ENCODE measurements at regions of chr6 and their contacts with region 1.

Region 1: GRCh38 chr6:36360241-36361054 is 23.8 kb upstream of the BNIP5 start:
- DNase-seq: peak; percentile 83 to 89
- H3K4me3 ChIP-seq: no peak overlapping the region
- H3K27ac ChIP-seq: peak overlapping the region; percentile 22 to 33
- H3K4me1 ChIP-seq: peaks cover 0 to 31% (median 22%) of the 10 kb centered on the region in 4 donors
- H3K27me3 ChIP-seq: peaks cover 0 to 3% of the 10 kb centered on the region in 2 donors
- CTCF ChIP-seq: peak; percentile 80 to 93

Region 2: GRCh38 chr6:35287671-35288396 is 1072.6 kb before region 1 on chr6:
- intact Hi-C with region 1: no loop called
- DNase-seq: no peak
- H3K4me3 ChIP-seq: no peak overlapping the region
- H3K27ac ChIP-seq: no peak overlapping the region
- H3K4me1 ChIP-seq: no peaks in the 10 kb centered on the region
- H3K27me3 ChIP-seq: no peaks in the 10 kb centered on the region
- CTCF ChIP-seq: no peak

Region 3: DNA sequence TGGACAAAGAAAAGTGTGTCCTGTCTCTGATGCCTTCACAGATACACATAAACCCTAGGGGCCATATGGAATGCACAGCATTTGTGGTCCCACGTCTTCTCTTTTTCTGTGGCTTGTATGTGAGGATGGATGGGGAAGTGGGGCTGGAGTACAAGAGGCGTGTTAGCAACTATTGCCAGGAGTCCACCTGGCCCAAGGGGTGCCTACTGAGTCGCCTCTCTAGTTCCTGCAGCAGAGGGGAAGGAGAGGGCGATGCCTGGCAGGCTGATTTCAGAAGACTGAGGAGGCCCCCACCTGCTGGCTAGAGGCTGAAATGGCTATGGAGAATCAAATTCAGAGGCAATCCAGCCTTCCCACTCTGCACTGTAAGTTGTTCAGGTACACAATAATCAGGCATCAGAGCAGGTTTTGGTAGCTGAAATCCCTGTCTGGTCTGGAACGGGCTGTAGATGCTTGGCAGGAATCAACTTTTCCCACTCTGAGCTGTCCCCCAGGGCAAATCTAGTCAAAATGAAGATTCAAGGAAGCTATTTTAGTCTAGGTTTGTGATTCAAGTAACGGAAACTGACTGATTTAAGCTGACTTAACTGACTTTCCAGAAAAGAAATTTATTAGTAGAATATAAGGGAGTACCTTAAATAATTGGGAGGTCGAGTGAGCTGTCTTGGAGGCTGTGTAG is 1033.0 kb before region 1 on chr6:
- intact Hi-C with region 1: no loop called
- DNase-seq: peak in 1 of 2 donors; percentile 48
- H3K4me3 ChIP-seq: no peak overlapping the region
- H3K27ac ChIP-seq: no peak overlapping the region
- H3K4me1 ChIP-seq: no peaks in the 10 kb centered on the region
- H3K27me3 ChIP-seq: peaks cover 0 to 4% of the 10 kb centered on the region in 2 donors
- CTCF ChIP-seq: peak; percentile 45 to 48

Region 4: GRCh38 chr6:36042618-36043260 is 317.7 kb before region 1 on chr6:
- intact Hi-C with region 1: loop called (anchors 5 kb)
- DNase-seq: no peak
- H3K4me3 ChIP-seq: no peak overlapping the region
- H3K27ac ChIP-seq: no peak overlapping the region
- H3K4me1 ChIP-seq: peaks cover 0 to 70% (median 28%) of the 10 kb centered on the region in 4 donors
- H3K27me3 ChIP-seq: no peaks in the 10 kb centered on the region
- CTCF ChIP-seq: no peak

Region 5: GRCh38 chr6:36123257-36124139 is 236.9 kb before region 1 on chr6:
- intact Hi-C with region 1: loop called (anchors 5 kb)
- DNase-seq: peak; percentile 81 to 89
- H3K4me3 ChIP-seq: no peak overlapping the region
- H3K27ac ChIP-seq: no peak overlapping the region
- H3K4me1 ChIP-seq: peaks cover 0 to 19% (median 5%) of the 10 kb centered on the region in 4 donors
- H3K27me3 ChIP-seq: peaks cover 0 to 32% of the 10 kb centered on the region in 2 donors
- CTCF ChIP-seq: peak; percentile 67 to 68

Region 6: DNA sequence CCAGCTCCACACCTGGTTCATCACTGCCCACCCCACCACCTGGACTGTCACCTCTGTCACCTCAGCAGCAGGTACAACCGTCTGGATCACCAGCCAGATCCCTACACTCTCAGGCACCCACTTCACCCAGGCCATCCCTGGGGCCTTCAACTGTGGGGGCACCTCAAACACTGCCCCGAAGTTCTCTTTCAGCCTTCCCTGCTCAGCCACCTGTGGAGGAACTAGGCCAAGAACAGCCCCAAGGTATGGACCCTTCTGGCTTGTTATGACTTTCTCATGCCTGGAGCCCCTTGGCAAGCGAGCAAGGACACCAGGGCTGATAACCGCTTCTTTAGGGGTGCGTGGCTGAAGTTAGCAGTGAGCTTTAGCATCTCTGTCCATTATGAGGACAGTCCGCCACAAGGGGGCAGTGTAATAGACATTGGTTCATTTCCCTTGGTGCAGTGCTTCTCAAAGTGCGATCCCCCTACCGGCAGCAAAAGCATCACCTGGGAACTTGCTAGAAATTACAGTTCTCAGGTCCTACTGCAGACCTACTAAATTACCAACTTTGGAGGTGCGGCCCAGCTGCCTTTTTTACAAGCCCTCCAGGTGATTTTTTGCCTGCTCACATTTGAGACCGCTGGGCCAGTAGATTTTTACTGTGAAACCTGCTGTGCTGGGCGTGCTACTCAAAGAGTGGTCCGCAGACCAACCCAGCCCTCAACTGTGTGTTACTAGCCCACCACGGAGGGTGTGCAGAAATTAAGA is 58.0 kb before region 1 on chr6:
- intact Hi-C with region 1: loop called (anchors 5 kb)
- DNase-seq: peak; percentile 88 to 89
- H3K4me3 ChIP-seq: no peak overlapping the region
- H3K27ac ChIP-seq: no peak overlapping the region
- H3K4me1 ChIP-seq: peaks cover 0 to 13% (median 5%) of the 10 kb centered on the region in 4 donors
- H3K27me3 ChIP-seq: peaks cover 0 to 10% of the 10 kb centered on the region in 2 donors
- CTCF ChIP-seq: peak; percentile 88

Region 7: GRCh38 chr6:36340618-36341454 is 19.6 kb before region 1 on chr6:
- intact Hi-C with region 1: loop called (anchors 2 kb)
- DNase-seq: peak; percentile 74 to 85
- H3K4me3 ChIP-seq: peak overlapping the region; percentile 28 to 32
- H3K27ac ChIP-seq: peak overlapping the region; percentile 34 to 52
- H3K4me1 ChIP-seq: peaks cover 0 to 23% (median 5%) of the 10 kb centered on the region in 4 donors
- H3K27me3 ChIP-seq: peaks cover 0 to under 1% of the 10 kb centered on the region in 2 donors
- CTCF ChIP-seq: peak; percentile 89 to 95

Region 8: DNA sequence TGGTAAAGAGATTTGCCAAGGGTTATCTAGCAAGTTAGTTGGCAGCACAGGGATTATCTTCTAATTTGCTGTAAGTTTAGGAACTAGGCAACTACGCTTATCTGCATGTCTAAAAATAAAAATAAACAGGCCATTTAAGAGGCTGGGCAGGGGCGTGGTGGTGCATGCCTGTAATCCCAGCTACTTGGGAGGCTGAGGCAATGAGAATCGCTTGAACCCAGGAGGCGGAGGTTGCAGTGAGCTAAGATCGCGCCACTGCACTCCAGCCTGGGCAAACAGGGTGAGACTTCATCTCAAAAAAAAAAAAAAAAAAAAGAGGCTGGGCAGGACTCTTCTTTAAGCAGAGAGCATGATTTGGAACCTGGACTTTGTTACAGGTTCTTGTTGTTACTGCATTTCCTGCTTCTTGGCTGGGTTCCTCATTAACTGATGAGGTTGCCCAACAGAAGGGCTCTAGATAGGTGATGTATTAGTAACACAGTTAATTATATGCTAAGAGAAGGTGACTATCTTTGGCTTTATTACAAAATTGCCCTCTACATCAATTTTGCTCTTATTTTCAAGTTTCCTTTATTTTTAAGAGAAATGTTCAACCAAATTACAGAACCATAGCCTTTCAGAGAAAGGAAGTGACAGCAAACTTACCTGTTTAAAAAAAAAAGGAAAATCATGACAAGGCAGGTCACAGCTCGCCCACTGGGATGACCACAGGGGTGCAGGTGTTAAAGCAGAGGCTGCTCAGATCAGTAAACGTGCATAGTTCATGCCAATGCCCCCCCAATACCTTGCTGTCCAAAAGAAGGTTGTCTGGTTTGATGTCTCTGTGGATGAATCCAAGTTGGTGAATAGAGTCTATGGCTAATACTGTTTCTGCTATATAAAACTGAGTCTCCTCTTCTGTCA is 154.4 kb after region 1 on chr6:
- intact Hi-C with region 1: no loop called
- DNase-seq: no peak
- H3K4me3 ChIP-seq: no peak overlapping the region
- H3K27ac ChIP-seq: no peak overlapping the region
- H3K4me1 ChIP-seq: no peaks in the 10 kb centered on the region
- H3K27me3 ChIP-seq: no peaks in the 10 kb centered on the region
- CTCF ChIP-seq: no peak

Region 9: GRCh38 chr6:36526066-36526465 is 165.6 kb after region 1 on chr6:
- intact Hi-C with region 1: no loop called
- DNase-seq: no peak
- H3K4me3 ChIP-seq: no peak overlapping the region
- H3K27ac ChIP-seq: no peak overlapping the region
- H3K4me1 ChIP-seq: no peaks in the 10 kb centered on the region
- H3K27me3 ChIP-seq: no peaks in the 10 kb centered on the region
- CTCF ChIP-seq: no peak